GM12878 (cell line): ENCODE measurements at regions of chr3 and their contacts with region 1.

Region 1: DNA sequence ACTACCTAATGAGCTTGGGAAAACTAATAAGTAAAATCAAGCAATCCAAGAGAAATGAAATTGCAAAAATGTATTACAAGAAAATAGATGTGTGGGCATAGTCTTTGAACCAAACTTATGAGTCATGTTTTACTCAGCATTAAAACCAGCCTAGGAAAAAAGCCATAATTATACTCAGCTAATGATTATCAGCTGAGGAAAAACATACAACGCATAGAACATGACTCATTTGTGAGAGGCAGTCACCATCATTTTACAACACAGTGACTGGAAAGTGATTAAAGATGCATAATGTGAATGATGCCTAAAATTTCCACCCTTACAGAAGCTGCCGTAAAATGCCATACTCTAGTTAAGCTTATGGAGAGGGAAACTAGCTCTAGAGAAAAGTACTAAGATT is 238.0 kb upstream of the EOMES start:
- DNase-seq: no peak
- ATAC-seq: peak; percentile 35
- H3K4me3 ChIP-seq: no peak overlapping the region
- H3K27ac ChIP-seq: no peak overlapping the region
- H3K4me1 ChIP-seq: no peaks in the 10 kb centered on the region
- H3K27me3 ChIP-seq: no peaks in the 10 kb centered on the region
- CTCF ChIP-seq: no peak
- EP300 ChIP-seq: no peak
- POLR2A ChIP-seq: no peak
- RAD21 ChIP-seq: no peak

Region 2: GRCh38 chr3:27945229-27945628 is 14.9 kb before region 1 on chr3:
- CTCF ChIA-PET with region 1: interaction called, 4 read pairs
- POLR2A ChIA-PET with region 1: no interaction called
- RAD21 ChIA-PET with region 1: no interaction called
- SMC1A ChIA-PET with region 1: interaction called, 13 read pairs
- in situ Hi-C with region 1: no loop called
- intact Hi-C with region 1: no loop called
- DNase-seq: no peak
- ATAC-seq: peak; percentile 52
- H3K4me3 ChIP-seq: no peak overlapping the region
- H3K27ac ChIP-seq: no peak overlapping the region
- H3K4me1 ChIP-seq: no peaks in the 10 kb centered on the region
- H3K27me3 ChIP-seq: no peaks in the 10 kb centered on the region
- CTCF ChIP-seq: no peak
- EP300 ChIP-seq: no peak
- POLR2A ChIP-seq: no peak
- RAD21 ChIP-seq: no peak

Region 3: GRCh38 chr3:27971600-27971999 is 11.5 kb after region 1 on chr3:
- CTCF ChIA-PET with region 1: interaction called, 14 read pairs
- POLR2A ChIA-PET with region 1: interaction called, 3 read pairs
- RAD21 ChIA-PET with region 1: interaction called, 4 read pairs
- SMC1A ChIA-PET with region 1: interaction called, 35 read pairs
- in situ Hi-C with region 1: no loop called
- intact Hi-C with region 1: no loop called
- DNase-seq: no peak
- ATAC-seq: peak; percentile 40; the same call in 2 of the 3 replicates
- H3K4me3 ChIP-seq: no peak overlapping the region
- H3K27ac ChIP-seq: no peak overlapping the region
- H3K4me1 ChIP-seq: no peaks in the 10 kb centered on the region
- H3K27me3 ChIP-seq: no peaks in the 10 kb centered on the region
- CTCF ChIP-seq: no peak
- EP300 ChIP-seq: no peak
- POLR2A ChIP-seq: no peak
- RAD21 ChIP-seq: no peak

Region 4: DNA sequence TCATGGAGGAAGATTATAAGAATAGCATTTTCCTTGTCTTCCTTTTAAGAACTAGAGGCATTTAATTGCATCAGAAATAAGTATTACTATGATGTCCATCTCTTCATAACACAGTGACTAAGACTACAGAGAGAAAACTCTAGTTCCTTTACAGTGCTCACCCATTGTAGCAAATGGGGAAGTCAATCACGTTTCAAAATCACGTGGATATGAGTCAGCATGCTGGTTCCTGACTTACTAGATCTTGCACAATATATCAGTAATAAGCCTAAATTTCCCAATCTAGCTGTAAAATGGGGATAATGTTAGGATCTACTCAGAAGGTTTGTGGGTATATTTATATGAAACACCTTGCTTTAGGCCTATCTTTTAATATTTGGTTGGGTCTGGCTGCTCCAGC is 16.8 kb after region 1 on chr3:
- CTCF ChIA-PET with region 1: interaction called, 14 read pairs
- POLR2A ChIA-PET with region 1: interaction called, 4 read pairs
- RAD21 ChIA-PET with region 1: interaction called, 3 read pairs
- SMC1A ChIA-PET with region 1: interaction called, 35 read pairs
- in situ Hi-C with region 1: no loop called
- intact Hi-C with region 1: no loop called
- DNase-seq: no peak
- ATAC-seq: peak; percentile 78
- H3K4me3 ChIP-seq: no peak overlapping the region
- H3K27ac ChIP-seq: no peak overlapping the region
- H3K4me1 ChIP-seq: no peaks in the 10 kb centered on the region
- H3K27me3 ChIP-seq: no peaks in the 10 kb centered on the region
- CTCF ChIP-seq: no peak
- EP300 ChIP-seq: no peak
- POLR2A ChIP-seq: no peak
- RAD21 ChIP-seq: no peak